ENCODE measurements at regions of chr11 and their contacts with region 1.

Region 1: GRCh38 chr11:127470306-127470884 is 469.8 kb upstream of the KIRREL3 start:
- H3K4me3 ChIP-seq: no peak overlapping the region
- H3K27ac ChIP-seq: no peak overlapping the region
- H3K4me1 ChIP-seq: no peaks in the 10 kb centered on the region
- CTCF ChIP-seq: no peak

Region 2: GRCh38 chr11:127493330-127494022 is 23.1 kb after region 1 on chr11:
- CTCF ChIA-PET with region 1: interaction called, 12 read pairs
- POLR2A ChIA-PET with region 1: no interaction called
- H3K4me3 ChIP-seq: no peak overlapping the region
- H3K27ac ChIP-seq: no peak overlapping the region
- H3K4me1 ChIP-seq: no peaks in the 10 kb centered on the region
- CTCF ChIP-seq: no peak

Region 3: GRCh38 chr11:127506126-127506525 is 35.7 kb after region 1 on chr11:
- CTCF ChIA-PET with region 1: no interaction called
- POLR2A ChIA-PET with region 1: no interaction called
- H3K4me3 ChIP-seq: no peak overlapping the region
- H3K27ac ChIP-seq: no peak overlapping the region
- H3K4me1 ChIP-seq: no peaks in the 10 kb centered on the region
- CTCF ChIP-seq: no peak

Measured in HEK293 (cell line).